ENCODE measurements at regions of chr3 and their contacts with region 1.

Region 1: GRCh38 chr3:171187706-171188290 is 161.3 kb upstream of the SLC2A2 start:
- DNase-seq: no peak
- H3K4me3 Mint-ChIP-seq: no peak overlapping the region
- H3K27ac Mint-ChIP-seq: no peak overlapping the region
- H3K4me1 Mint-ChIP-seq: peaks cover 70% of the 10 kb centered on the region
- H3K27me3 Mint-ChIP-seq: no peaks in the 10 kb centered on the region

Region 2: DNA sequence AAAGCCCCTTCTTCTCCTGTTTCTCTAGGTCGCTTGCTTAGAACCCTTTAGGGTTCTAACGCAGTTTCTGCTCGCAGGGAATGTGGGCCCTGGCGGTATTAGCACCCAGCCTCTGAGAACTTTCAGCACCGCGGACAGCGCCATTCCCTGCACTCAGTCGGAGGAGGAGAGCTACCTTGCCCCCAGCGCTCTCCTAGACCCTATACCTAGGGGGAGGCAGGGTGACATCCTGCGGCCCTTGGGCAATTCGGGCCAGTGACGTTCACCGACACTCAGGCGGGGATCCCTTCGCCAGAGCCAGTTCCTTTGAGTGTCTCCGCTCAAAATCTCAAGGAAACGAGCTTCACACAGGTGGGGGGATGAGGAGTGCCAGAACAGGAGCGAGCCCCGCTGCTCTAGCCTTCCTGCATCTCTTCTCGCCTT is 603.2 kb before region 1 on chr3:
- intact Hi-C with region 1: no loop called
- DNase-seq: peak; percentile 39
- H3K4me3 Mint-ChIP-seq: no peak overlapping the region
- H3K27ac Mint-ChIP-seq: no peak overlapping the region
- H3K4me1 Mint-ChIP-seq: peaks cover 3% of the 10 kb centered on the region
- H3K27me3 Mint-ChIP-seq: peaks cover 61% of the 10 kb centered on the region

Region 3: GRCh38 chr3:170961616-170962400 is 226.0 kb before region 1 on chr3:
- intact Hi-C with region 1: loop called (anchors 10 kb)
- DNase-seq: no peak
- H3K4me3 Mint-ChIP-seq: no peak overlapping the region
- H3K27ac Mint-ChIP-seq: no peak overlapping the region
- H3K4me1 Mint-ChIP-seq: no peaks in the 10 kb centered on the region
- H3K27me3 Mint-ChIP-seq: peaks cover 24% of the 10 kb centered on the region

Region 4: DNA sequence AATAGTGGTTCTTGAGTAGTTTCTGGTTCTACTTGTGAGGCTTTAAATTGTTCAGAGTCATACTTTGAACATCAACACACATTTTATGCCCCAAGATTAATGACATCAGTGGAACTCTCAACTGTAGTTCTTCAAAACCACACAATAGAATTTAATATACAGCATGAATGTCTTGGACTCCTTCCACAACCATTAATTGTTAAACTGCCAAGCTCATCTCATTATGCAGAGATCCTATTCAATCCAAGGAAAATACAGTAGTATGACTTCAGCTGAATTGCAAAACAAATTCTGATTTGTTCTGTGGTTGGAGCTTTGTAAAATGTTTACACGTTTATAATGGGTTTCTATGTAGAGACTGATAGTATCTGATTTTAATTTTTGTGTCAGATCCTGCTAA is 37.9 kb after region 1 on chr3:
- intact Hi-C with region 1: loop called (anchors 1 kb)
- DNase-seq: no peak
- H3K4me3 Mint-ChIP-seq: no peak overlapping the region
- H3K27ac Mint-ChIP-seq: peak overlapping the region; percentile 69
- H3K4me1 Mint-ChIP-seq: peaks cover 56% of the 10 kb centered on the region
- H3K27me3 Mint-ChIP-seq: no peaks in the 10 kb centered on the region

Region 5: GRCh38 chr3:171255236-171255806 is 67.5 kb after region 1 on chr3:
- intact Hi-C with region 1: loop called (anchors 1 kb)
- DNase-seq: no peak
- H3K4me3 Mint-ChIP-seq: peak overlapping the region; percentile 60
- H3K27ac Mint-ChIP-seq: peak overlapping the region; percentile 94
- H3K4me1 Mint-ChIP-seq: peaks cover 92% of the 10 kb centered on the region
- H3K27me3 Mint-ChIP-seq: no peaks in the 10 kb centered on the region

Region 6: GRCh38 chr3:171358181-171358880 is 170.5 kb after region 1 on chr3:
- intact Hi-C with region 1: loop called (anchors 2 kb)
- DNase-seq: no peak
- H3K4me3 Mint-ChIP-seq: no peak overlapping the region
- H3K27ac Mint-ChIP-seq: no peak overlapping the region
- H3K4me1 Mint-ChIP-seq: peaks cover 42% of the 10 kb centered on the region
- H3K27me3 Mint-ChIP-seq: no peaks in the 10 kb centered on the region